CD8-positive, alpha-beta T cell (primary cell): ENCODE measurements at regions of chr14 and their contacts with region 1.

Region 1: GRCh38 chr14:93115069-93115820 is 480 bp downstream of the ITPK1 start:
- DNase-seq: peak; percentile 65 to 93 (median 81)
- ATAC-seq: peak; percentile 81
- H3K4me3 ChIP-seq: peak overlapping the region; percentile 58 to 76
- H3K4me3 Mint-ChIP-seq: peak overlapping the region; percentile 88
- H3K27ac ChIP-seq: peak overlapping the region; percentile 43 to 53
- H3K27ac Mint-ChIP-seq: peak overlapping the region; percentile 89
- H3K4me1 ChIP-seq: peaks cover 34% of the 10 kb centered on the region
- H3K4me1 Mint-ChIP-seq: peaks cover 34% of the 10 kb centered on the region
- H3K27me3 ChIP-seq: no peaks in the 10 kb centered on the region
- H3K27me3 Mint-ChIP-seq: no peaks in the 10 kb centered on the region
- CTCF ChIP-seq: no peak

Region 2: DNA sequence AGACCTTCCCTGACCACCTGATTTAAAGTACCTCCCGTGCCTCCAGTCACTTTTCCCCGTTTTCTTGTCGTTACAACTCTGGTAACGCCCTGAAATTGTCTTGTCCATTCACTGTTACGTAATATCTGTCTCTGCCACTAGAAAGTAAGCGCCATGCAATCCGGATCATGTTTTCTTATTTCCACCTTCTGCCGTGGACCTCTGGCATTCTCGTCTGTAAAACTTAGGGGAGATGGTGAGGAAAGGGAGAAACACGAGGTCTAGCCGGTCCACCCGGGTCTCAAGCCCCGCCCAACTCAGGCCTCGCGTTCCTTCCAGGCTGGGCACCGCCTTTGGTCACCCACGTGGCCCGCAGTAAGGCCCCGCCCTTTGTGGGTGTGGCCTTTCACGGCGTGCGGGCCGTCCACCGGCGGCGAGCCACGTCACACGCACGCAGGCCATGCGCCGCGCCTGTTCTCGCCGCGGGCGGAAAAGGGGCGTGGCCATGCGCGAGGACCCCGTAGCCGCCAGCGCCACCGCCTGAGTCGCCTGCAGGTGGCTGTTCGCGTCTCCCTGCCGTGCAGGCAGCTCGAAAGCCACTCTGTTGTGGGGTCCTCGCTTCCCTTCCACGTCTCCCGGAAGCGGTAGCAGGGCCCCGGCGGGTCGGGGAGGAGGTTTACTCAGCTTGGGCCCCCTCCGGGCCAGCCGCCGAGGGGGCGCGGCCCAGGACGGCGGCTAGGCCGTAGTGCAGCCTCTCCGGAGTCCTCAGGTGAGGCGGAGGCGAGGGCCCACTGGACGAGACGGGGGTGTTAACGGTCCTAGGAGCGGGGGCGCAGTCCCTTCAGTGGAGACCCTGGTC is 321.3 kb before region 1 on chr14 and contains the start of gene GOLGA5:
- CTCF ChIA-PET with region 1: interaction called, 3 read pairs
- POLR2A ChIA-PET with region 1: no interaction called
- intact Hi-C with region 1: loop called in 1 of 2 experiments (anchors 10 kb)
- DNase-seq: peak; percentile 97 to 99 (median 98)
- ATAC-seq: peak; percentile 94
- H3K4me3 ChIP-seq: peak within 1 kb of the TSS; percentile 92 to 99
- H3K4me3 Mint-ChIP-seq: peak within 1 kb of the TSS; percentile 97
- H3K27ac ChIP-seq: peak within 1 kb of the TSS; percentile 88 to 92
- H3K27ac Mint-ChIP-seq: peak within 1 kb of the TSS; percentile 97
- H3K4me1 ChIP-seq: peaks cover 27% of the 10 kb centered on the region
- H3K4me1 Mint-ChIP-seq: peaks cover 38% of the 10 kb centered on the region
- H3K27me3 ChIP-seq: no peaks in the 10 kb centered on the region
- H3K27me3 Mint-ChIP-seq: no peaks in the 10 kb centered on the region
- CTCF ChIP-seq: no peak
- total RNA-seq, gene GOLGA5: 4.5 to 5.9 TPM

Region 3: GRCh38 chr14:93040443-93040842 is 74.8 kb before region 1 on chr14:
- CTCF ChIA-PET with region 1: interaction called, 43 read pairs
- POLR2A ChIA-PET with region 1: no interaction called
- intact Hi-C with region 1: no loop called
- DNase-seq: no peak
- ATAC-seq: no peak
- H3K4me3 ChIP-seq: no peak overlapping the region
- H3K4me3 Mint-ChIP-seq: no peak overlapping the region
- H3K27ac ChIP-seq: peak overlapping the region; percentile 7 to 16
- H3K27ac Mint-ChIP-seq: peak overlapping the region; percentile 72
- H3K4me1 ChIP-seq: peaks cover 59% of the 10 kb centered on the region
- H3K4me1 Mint-ChIP-seq: peaks cover 59% of the 10 kb centered on the region
- H3K27me3 ChIP-seq: no peaks in the 10 kb centered on the region
- H3K27me3 Mint-ChIP-seq: no peaks in the 10 kb centered on the region
- CTCF ChIP-seq: no peak

Region 4: GRCh38 chr14:93073910-93074769 is 41.1 kb before region 1 on chr14:
- CTCF ChIA-PET with region 1: interaction called, 65 read pairs
- POLR2A ChIA-PET with region 1: no interaction called
- intact Hi-C with region 1: no loop called
- DNase-seq: peak in 1 of 9 experiments; percentile 44
- ATAC-seq: peak; percentile 51
- H3K4me3 ChIP-seq: peak overlapping the region in 1 of 2 experiments; percentile 18
- H3K4me3 Mint-ChIP-seq: peak overlapping the region; percentile 53
- H3K27ac ChIP-seq: peak overlapping the region in 1 of 2 experiments; percentile 63
- H3K27ac Mint-ChIP-seq: peak overlapping the region; percentile 86
- H3K4me1 ChIP-seq: peaks cover 77% of the 10 kb centered on the region
- H3K4me1 Mint-ChIP-seq: peaks cover 71% of the 10 kb centered on the region
- H3K27me3 ChIP-seq: no peaks in the 10 kb centered on the region
- H3K27me3 Mint-ChIP-seq: no peaks in the 10 kb centered on the region
- CTCF ChIP-seq: no peak

Region 5: GRCh38 chr14:93132470-93133065 is 17.3 kb after region 1 on chr14:
- CTCF ChIA-PET with region 1: interaction called, 249 read pairs
- POLR2A ChIA-PET with region 1: interaction called, 4 read pairs
- intact Hi-C with region 1: loop called in 1 of 2 experiments (anchors 1 kb)
- DNase-seq: peak in 7 of 9 experiments; percentile 14 to 67 (median 44)
- ATAC-seq: peak; percentile 56
- H3K4me3 ChIP-seq: no peak overlapping the region
- H3K4me3 Mint-ChIP-seq: no peak overlapping the region
- H3K27ac ChIP-seq: no peak overlapping the region
- H3K27ac Mint-ChIP-seq: no peak overlapping the region
- H3K4me1 ChIP-seq: no peaks in the 10 kb centered on the region
- H3K4me1 Mint-ChIP-seq: no peaks in the 10 kb centered on the region
- H3K27me3 ChIP-seq: peaks cover 0 to 2% of the 10 kb centered on the region in 2 experiments
- H3K27me3 Mint-ChIP-seq: no peaks in the 10 kb centered on the region
- CTCF ChIP-seq: peak; percentile 32

Region 6: DNA sequence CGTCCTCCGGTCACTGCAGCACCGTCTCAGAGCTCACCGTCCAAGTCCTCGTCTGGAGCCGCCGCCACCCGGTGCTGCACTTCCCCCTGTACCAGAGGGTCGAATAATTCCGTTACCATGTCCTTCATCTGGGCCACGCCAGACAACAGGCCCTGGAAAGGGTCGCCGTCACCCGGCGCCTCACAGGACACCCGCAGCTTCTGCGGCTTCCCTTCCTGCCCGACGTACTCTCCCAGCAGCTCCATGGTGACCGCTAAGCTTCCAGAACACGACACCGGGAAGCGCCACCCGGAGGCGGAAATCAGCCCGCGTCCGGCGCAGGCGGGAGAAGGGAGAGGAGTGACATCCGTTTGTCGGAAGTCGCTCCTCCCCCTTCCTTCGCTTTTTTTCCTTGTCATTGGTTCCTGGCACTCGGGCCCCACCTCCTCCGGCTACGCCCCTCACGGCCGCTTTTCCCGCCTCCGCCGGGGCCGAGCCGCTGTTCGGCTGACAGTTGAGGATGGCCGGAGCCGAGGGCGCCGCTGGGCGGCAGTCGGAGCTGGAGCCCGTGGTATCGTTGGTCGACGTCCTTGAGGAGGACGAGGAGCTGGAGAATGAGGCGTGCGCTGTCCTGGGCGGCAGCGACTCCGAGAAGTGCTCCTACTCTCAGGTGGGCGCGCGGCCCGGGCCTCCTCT is 91.7 kb after region 1 on chr14 and contains the starts of genes GON7 and UBR7:
- CTCF ChIA-PET with region 1: interaction called, 10 read pairs
- POLR2A ChIA-PET with region 1: no interaction called
- intact Hi-C with region 1: loop called (anchors 1 kb)
- DNase-seq: peak; percentile 65 to 96 (median 87)
- ATAC-seq: peak; percentile 96
- H3K4me3 ChIP-seq: peak within 1 kb of the TSS; percentile 96 to 99
- H3K4me3 Mint-ChIP-seq: peak within 1 kb of the TSS; percentile 95
- H3K27ac ChIP-seq: peak within 1 kb of the TSS; percentile 79 to 82
- H3K27ac Mint-ChIP-seq: peak within 1 kb of the TSS; percentile 90
- H3K4me1 ChIP-seq: peaks cover 33% of the 10 kb centered on the region
- H3K4me1 Mint-ChIP-seq: peaks cover 46% of the 10 kb centered on the region
- H3K27me3 ChIP-seq: no peaks in the 10 kb centered on the region
- H3K27me3 Mint-ChIP-seq: no peaks in the 10 kb centered on the region
- CTCF ChIP-seq: no peak
- total RNA-seq, gene GON7: 1.4 to 2.4 TPM
- total RNA-seq, gene UBR7: 6.7 to 7.0 TPM

Region 7: DNA sequence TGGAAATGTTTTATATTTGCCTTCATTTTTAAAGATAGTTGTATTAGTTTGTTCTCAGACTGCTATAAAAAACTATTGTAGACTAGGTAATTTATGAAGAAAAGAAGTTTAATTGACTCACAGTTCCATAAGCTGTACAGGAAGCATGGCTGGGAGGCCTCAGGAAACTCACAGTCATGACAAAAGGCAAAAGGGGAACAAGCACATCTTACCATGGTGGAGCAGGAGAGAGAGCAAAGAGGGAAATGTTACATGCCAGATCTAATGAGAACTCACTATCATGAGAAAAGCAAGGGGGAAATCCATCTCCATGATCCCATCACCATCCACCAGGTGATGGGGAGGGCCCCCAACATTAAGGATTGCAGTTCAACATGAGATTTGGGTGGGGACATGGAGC is 280.0 kb after region 1 on chr14:
- CTCF ChIA-PET with region 1: no interaction called
- POLR2A ChIA-PET with region 1: no interaction called
- intact Hi-C with region 1: no loop called
- DNase-seq: no peak
- ATAC-seq: no peak
- H3K4me3 ChIP-seq: no peak overlapping the region
- H3K4me3 Mint-ChIP-seq: no peak overlapping the region
- H3K27ac ChIP-seq: no peak overlapping the region
- H3K27ac Mint-ChIP-seq: no peak overlapping the region
- H3K4me1 ChIP-seq: no peaks in the 10 kb centered on the region
- H3K4me1 Mint-ChIP-seq: no peaks in the 10 kb centered on the region
- H3K27me3 ChIP-seq: no peaks in the 10 kb centered on the region
- H3K27me3 Mint-ChIP-seq: peaks cover 29% of the 10 kb centered on the region
- CTCF ChIP-seq: no peak

Region 8: DNA sequence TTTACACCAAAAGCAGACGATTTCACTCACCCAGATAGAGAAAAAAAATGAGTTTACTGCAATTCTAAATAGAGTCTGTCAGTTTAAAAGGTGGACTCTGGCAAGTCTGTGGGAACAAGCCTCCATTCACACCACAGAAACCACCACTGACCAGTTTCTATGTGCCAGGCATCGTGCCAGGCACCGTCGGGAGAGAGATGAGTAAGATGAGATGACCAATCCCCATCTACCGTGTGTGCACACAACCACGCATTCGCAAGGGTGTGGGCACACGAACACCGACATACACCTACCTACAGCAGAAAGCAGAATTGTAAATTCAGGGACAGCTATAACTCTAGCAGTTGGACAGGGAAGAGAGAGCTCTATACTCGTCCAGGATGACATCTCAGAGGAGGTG is 614.7 kb after region 1 on chr14:
- CTCF ChIA-PET with region 1: no interaction called
- POLR2A ChIA-PET with region 1: no interaction called
- intact Hi-C with region 1: no loop called
- DNase-seq: no peak
- ATAC-seq: no peak
- H3K4me3 ChIP-seq: no peak overlapping the region
- H3K4me3 Mint-ChIP-seq: no peak overlapping the region
- H3K27ac ChIP-seq: no peak overlapping the region
- H3K27ac Mint-ChIP-seq: no peak overlapping the region
- H3K4me1 ChIP-seq: no peaks in the 10 kb centered on the region
- H3K4me1 Mint-ChIP-seq: no peaks in the 10 kb centered on the region
- H3K27me3 ChIP-seq: no peaks in the 10 kb centered on the region
- H3K27me3 Mint-ChIP-seq: no peaks in the 10 kb centered on the region
- CTCF ChIP-seq: no peak

Region 9: DNA sequence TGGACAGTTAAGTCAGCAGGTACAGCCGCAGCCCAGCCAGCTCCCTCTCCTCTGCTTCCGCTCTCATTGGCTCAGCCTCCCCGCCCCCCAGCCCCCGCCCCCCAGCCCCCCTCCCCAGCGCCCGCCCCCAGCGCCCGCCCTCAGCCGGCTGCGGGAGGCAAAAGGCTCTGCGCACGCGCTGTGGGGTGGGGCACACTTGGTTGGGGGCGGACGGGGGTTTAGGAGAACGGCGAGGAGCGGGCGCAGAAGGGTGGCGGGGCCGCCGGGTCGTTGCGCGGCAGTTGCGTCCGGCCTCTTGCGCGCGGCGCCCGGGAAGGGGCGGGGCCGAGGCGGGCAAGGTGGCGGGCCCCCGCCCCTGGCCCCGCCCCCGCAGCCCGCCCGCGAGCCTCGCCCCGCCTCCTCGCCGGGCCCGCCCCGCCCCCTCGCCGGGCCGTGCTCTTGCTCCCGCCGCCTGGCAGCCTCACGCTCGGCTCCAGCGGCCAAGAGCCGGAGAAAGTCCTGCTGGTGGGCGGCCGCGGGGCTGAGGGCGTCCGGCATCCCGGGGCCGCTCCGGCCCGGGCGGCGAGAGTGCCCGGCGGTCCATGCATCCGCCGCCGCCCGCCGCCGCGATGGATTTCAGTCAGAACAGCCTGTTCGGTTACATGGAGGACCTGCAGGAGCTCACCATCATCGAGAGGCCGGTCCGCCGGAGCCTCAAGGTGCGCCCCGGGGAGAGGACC is 1058.8 kb after region 1 on chr14 and contains the start of gene PPP4R4:
- CTCF ChIA-PET with region 1: no interaction called
- POLR2A ChIA-PET with region 1: no interaction called
- intact Hi-C with region 1: loop called (anchors 5 kb)
- DNase-seq: peak; percentile 66 to 93 (median 84)
- ATAC-seq: peak; percentile 89
- H3K4me3 ChIP-seq: peak within 1 kb of the TSS; percentile 62 to 77
- H3K4me3 Mint-ChIP-seq: peak within 1 kb of the TSS; percentile 84
- H3K27ac ChIP-seq: no peak within 1 kb of the TSS
- H3K27ac Mint-ChIP-seq: no peak within 1 kb of the TSS
- H3K4me1 ChIP-seq: peaks cover 12% of the 10 kb centered on the region
- H3K4me1 Mint-ChIP-seq: peaks cover 18% of the 10 kb centered on the region
- H3K27me3 ChIP-seq: peaks cover 0 to 8% of the 10 kb centered on the region in 2 experiments
- H3K27me3 Mint-ChIP-seq: peaks cover 16% of the 10 kb centered on the region
- CTCF ChIP-seq: no peak
- total RNA-seq, gene PPP4R4: not detected

Region 10: DNA sequence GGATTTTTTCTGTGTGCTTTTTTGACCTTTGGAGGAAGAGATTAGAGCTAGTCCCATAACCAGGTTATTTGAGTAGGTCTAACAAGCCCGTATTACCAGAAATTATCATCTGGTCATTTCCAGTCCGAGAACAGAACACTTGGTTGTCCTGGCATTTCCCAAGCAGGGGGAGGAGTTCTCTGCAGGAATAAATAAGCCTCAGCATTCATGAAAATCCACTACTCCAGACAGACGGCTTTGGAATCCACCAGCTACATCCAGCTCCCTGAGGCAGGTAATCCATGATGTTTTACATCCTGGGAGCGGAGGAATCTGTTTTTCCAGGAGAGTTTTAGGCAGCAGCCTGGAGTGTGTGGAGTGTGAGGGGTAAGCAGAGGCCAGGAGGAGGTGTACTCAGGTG is 1496.9 kb after region 1 on chr14 and contains the start of gene SERPINA3:
- CTCF ChIA-PET with region 1: no interaction called
- POLR2A ChIA-PET with region 1: no interaction called
- intact Hi-C with region 1: no loop called
- DNase-seq: no peak
- ATAC-seq: no peak
- H3K4me3 ChIP-seq: no peak within 1 kb of the TSS
- H3K4me3 Mint-ChIP-seq: no peak within 1 kb of the TSS
- H3K27ac ChIP-seq: no peak within 1 kb of the TSS
- H3K27ac Mint-ChIP-seq: no peak within 1 kb of the TSS
- H3K4me1 ChIP-seq: no peaks in the 10 kb centered on the region
- H3K4me1 Mint-ChIP-seq: no peaks in the 10 kb centered on the region
- H3K27me3 ChIP-seq: no peaks in the 10 kb centered on the region
- H3K27me3 Mint-ChIP-seq: no peaks in the 10 kb centered on the region
- CTCF ChIP-seq: no peak
- total RNA-seq, gene SERPINA3: not detected